Naive thymus-derived CD4-positive, alpha-beta T cell (primary cell): ENCODE measurements at regions of chr3 and their contacts with region 1.

Region 1: DNA sequence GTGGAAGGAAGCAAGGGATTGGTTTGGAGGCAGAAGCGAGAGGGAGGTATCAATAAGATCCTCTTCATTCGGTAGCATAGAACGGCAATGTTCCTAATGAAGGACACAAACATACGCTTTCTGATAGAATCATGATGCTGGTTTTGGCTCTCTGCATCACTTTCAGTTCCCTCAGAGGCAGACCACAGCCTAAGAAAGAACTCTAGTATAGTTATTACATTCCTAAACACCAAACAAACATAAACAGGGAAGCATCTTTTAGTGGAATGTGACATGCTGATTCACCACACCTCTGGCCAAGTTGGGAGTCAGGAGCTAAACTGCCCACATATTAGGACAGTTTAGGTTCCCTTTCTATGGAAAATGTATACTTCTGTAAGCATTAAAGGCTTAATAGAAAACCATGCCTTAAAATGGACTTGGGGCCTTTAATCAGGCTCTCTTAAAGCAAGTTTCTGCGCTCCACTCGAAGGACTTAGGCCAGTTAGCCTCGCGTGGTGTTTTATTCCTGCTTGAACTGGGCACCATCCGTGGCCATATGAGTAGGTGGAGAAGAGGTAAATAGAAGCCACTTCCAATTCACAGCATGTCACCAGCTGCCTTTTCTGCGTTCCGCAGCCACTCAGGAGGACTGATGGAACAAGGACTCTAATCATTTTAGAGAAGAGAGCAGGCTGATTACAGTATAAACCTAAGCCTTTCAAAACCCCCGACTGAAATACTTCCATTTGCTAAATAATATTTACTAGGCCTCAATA is 53.7 kb downstream of the CD47 start:
- DNase-seq: no peak
- ATAC-seq: peak; percentile 46
- H3K4me3 ChIP-seq: no peak overlapping the region
- H3K4me3 Mint-ChIP-seq: no peak overlapping the region
- H3K27ac ChIP-seq: no peak overlapping the region
- H3K27ac Mint-ChIP-seq: peak overlapping the region in 5 of 9 donors; percentile 5 to 85 (median 22)
- H3K4me1 ChIP-seq: no peaks in the 10 kb centered on the region
- H3K4me1 Mint-ChIP-seq: peaks cover 10 to 34% (median 23%) of the 10 kb centered on the region in 7 donors
- H3K27me3 ChIP-seq: no peaks in the 10 kb centered on the region
- H3K27me3 Mint-ChIP-seq: no peaks in the 10 kb centered on the region

Region 2: DNA sequence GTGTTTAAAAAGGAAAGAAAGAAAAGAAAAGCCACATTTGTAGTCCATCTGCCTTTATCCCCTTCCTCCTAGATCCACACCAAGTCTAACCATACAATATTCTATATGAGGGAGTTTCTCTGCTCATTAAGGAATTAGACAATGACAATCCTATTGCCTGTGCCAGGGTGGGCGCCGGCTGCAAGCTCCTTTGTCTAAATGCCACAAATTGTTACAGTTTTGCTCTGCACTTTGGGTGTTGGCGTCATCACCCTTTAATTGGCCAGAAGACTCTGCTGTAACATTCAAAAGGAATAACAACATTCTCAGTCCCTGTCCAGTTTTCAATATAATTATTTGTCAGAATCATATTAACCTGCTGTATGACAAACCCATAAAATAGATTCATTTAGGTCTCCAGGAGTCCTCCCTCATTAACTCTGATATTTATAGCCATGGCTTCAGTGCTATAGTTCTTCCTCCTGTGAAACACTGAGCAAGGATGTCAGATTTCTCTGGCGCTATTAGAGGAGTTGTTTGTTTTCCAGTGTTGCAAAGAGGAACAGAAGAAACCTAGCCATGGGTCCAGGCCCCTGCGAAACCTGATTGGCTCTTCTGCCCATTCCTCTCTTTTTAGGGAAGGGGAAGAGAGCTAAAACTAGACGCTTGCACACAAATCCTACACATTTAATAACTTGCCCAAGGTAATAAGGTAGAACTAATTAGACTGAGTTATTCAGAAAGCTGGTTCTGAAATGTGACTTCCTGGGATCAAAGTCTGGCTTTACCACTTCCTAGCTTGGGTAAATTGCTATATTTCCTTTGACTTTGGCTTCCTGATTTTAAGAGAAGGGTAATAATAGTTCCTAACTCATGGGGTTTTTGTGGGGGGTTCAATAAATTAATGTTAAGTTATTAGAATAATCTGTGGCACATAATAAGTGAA is 58.8 kb before region 1 on chr3:
- CTCF ChIA-PET with region 1: no interaction called
- POLR2A ChIA-PET with region 1: no interaction called
- intact Hi-C with region 1: loop called in 1 of 2 experiments (anchors 5 kb)
- DNase-seq: peak in 5 of 9 donors; percentile 18 to 35 (median 20)
- ATAC-seq: no peak
- H3K4me3 ChIP-seq: peak overlapping the region; percentile 23
- H3K4me3 Mint-ChIP-seq: peak overlapping the region; percentile 26 to 84 (median 70)
- H3K27ac ChIP-seq: no peak overlapping the region
- H3K27ac Mint-ChIP-seq: peak overlapping the region in 5 of 9 donors; percentile 19 to 76 (median 67)
- H3K4me1 ChIP-seq: peaks cover 43 to 49% of the 10 kb centered on the region in 2 donors
- H3K4me1 Mint-ChIP-seq: peaks cover 34 to 83% (median 72%) of the 10 kb centered on the region in 7 donors
- H3K27me3 ChIP-seq: no peaks in the 10 kb centered on the region
- H3K27me3 Mint-ChIP-seq: peaks cover 0 to 16% (median 0%) of the 10 kb centered on the region in 5 donors

Region 3: DNA sequence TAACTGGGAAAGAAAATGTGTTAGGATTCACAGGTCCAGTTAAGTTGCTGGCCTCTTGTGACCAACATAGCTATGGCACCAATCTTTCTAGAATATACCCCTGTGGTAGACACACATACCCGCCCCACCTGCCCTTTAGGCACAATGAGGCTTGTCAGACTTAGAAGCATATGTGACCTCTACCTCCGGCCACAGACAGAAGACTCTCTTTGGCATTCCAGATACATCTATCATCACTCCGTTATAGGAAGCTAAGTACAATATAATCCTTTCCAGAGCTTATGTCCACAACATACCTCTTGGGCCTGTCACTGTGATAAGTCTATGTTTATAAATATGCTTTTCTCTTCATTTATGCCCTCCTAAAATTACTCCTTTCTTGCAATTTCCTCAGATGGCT is 13.8 kb after region 1 on chr3:
- CTCF ChIA-PET with region 1: no interaction called
- POLR2A ChIA-PET with region 1: no interaction called
- intact Hi-C with region 1: no loop called
- DNase-seq: no peak
- ATAC-seq: no peak
- H3K4me3 ChIP-seq: no peak overlapping the region
- H3K4me3 Mint-ChIP-seq: no peak overlapping the region
- H3K27ac ChIP-seq: no peak overlapping the region
- H3K27ac Mint-ChIP-seq: peak overlapping the region in 3 of 9 donors; percentile 38 to 71 (median 48)
- H3K4me1 ChIP-seq: peaks cover 4 to 8% of the 10 kb centered on the region in 2 donors
- H3K4me1 Mint-ChIP-seq: peaks cover 29 to 70% (median 46%) of the 10 kb centered on the region in 7 donors
- H3K27me3 ChIP-seq: no peaks in the 10 kb centered on the region
- H3K27me3 Mint-ChIP-seq: no peaks in the 10 kb centered on the region

Region 4: GRCh38 chr3:108067768-108068167 is 30.6 kb after region 1 on chr3:
- CTCF ChIA-PET with region 1: no interaction called
- POLR2A ChIA-PET with region 1: interaction called, 6 read pairs
- intact Hi-C with region 1: loop called in 1 of 2 experiments (anchors 2 kb)
- DNase-seq: no peak
- ATAC-seq: no peak
- H3K4me3 ChIP-seq: no peak overlapping the region
- H3K4me3 Mint-ChIP-seq: no peak overlapping the region
- H3K27ac ChIP-seq: no peak overlapping the region
- H3K27ac Mint-ChIP-seq: peak overlapping the region in 4 of 9 donors; percentile 13 to 54 (median 38)
- H3K4me1 ChIP-seq: peaks cover 16 to 20% of the 10 kb centered on the region in 2 donors
- H3K4me1 Mint-ChIP-seq: peaks cover 39 to 96% (median 86%) of the 10 kb centered on the region in 7 donors
- H3K27me3 ChIP-seq: no peaks in the 10 kb centered on the region
- H3K27me3 Mint-ChIP-seq: no peaks in the 10 kb centered on the region

Region 5: GRCh38 chr3:108117241-108117775 is 80.1 kb after region 1 on chr3:
- CTCF ChIA-PET with region 1: no interaction called
- POLR2A ChIA-PET with region 1: no interaction called
- intact Hi-C with region 1: no loop called
- DNase-seq: no peak
- ATAC-seq: no peak
- H3K4me3 ChIP-seq: no peak overlapping the region
- H3K4me3 Mint-ChIP-seq: no peak overlapping the region
- H3K27ac ChIP-seq: no peak overlapping the region
- H3K27ac Mint-ChIP-seq: no peak overlapping the region
- H3K4me1 ChIP-seq: no peaks in the 10 kb centered on the region
- H3K4me1 Mint-ChIP-seq: peaks cover 8 to 36% (median 18%) of the 10 kb centered on the region in 7 donors
- H3K27me3 ChIP-seq: no peaks in the 10 kb centered on the region
- H3K27me3 Mint-ChIP-seq: peaks cover 0 to 8% (median 0%) of the 10 kb centered on the region in 5 donors